CD4-positive, alpha-beta memory T cell (primary cell): ENCODE measurements at regions of chrX and their contacts with region 1.

Region 1: DNA sequence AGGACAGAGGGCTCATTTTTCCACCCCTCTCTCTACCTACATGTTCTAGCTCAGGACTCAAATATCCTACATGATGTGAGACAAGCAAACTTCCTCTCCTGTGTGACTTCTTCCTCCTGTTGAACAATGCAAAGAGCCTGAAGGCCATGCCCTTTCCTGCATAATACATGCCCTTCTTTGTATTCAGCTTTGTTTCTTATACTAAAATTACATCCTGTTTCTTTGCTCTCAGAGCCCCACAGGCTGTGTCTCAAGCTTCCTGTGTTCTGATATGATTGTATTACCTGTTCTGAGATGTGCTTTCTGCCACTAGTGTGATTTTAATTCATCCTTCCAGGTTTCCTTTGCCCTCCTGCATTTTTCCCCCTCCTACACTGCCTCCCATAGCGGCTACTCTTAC is 166.4 kb upstream of the AFF2 start:
- DNase-seq: peak in 4 of 5 donors; percentile 35 to 48 (median 40)
- H3K4me3 ChIP-seq: no peak overlapping the region
- H3K4me3 Mint-ChIP-seq: peak overlapping the region in 7 of 8 donors; percentile 27 to 72 (median 66)
- H3K27ac ChIP-seq: no peak overlapping the region
- H3K27ac Mint-ChIP-seq: peak overlapping the region; percentile 43 to 96 (median 82)
- H3K4me1 ChIP-seq: peaks cover 39% of the 10 kb centered on the region
- H3K4me1 Mint-ChIP-seq: peaks cover 20 to 47% (median 25%) of the 10 kb centered on the region in 4 donors
- H3K27me3 ChIP-seq: no peaks in the 10 kb centered on the region
- H3K27me3 Mint-ChIP-seq: no peaks in the 10 kb centered on the region

Region 2: GRCh38 chrX:148298737-148299136 is 35.3 kb before region 1 on chrX:
- CTCF ChIA-PET with region 1: no interaction called
- POLR2A ChIA-PET with region 1: no interaction called
- intact Hi-C with region 1: loop called (anchors 1 kb)
- DNase-seq: peak in 1 of 5 donors; percentile 53
- H3K4me3 ChIP-seq: no peak overlapping the region
- H3K4me3 Mint-ChIP-seq: no peak overlapping the region
- H3K27ac ChIP-seq: no peak overlapping the region
- H3K27ac Mint-ChIP-seq: no peak overlapping the region
- H3K4me1 ChIP-seq: no peaks in the 10 kb centered on the region
- H3K4me1 Mint-ChIP-seq: peaks cover 0 to 13% (median under 1%) of the 10 kb centered on the region in 4 donors
- H3K27me3 ChIP-seq: no peaks in the 10 kb centered on the region
- H3K27me3 Mint-ChIP-seq: peaks cover 0 to 1% of the 10 kb centered on the region in 2 donors

Region 3: DNA sequence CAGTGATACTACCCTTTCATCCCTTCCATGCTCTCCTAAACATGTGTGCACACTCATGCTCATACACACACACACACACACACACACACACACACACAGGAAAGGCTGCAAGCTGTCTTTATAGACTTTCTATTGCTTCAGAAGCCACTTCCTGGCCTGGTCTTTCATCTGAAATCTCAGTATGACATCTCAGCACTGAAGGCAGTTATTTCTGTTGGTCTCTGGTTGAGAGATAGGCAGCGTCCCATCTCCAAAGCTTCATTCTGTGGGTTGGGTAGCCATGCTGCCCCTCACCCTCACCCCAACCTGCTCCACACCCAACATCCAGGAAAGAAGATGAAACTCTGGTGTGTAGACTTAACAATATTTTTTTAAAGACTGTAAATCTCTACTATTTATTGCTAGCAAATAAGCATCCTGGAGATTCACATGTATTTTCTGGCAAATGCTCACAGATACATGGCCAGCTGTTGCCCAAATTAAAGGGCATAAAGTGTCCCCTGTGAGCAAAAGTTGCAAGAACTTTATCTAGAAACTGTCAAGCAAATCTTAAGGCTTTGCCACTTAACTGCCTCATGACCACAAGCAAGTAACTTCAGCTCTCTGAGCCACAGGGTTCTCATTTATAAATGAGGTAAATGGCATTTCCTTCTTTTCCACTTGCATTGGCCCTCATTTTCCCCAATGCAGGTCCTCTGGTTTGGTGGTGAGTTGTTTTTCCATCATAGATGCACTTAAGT is 23.4 kb before region 1 on chrX:
- CTCF ChIA-PET with region 1: interaction called, 5 read pairs
- POLR2A ChIA-PET with region 1: interaction called, 20 read pairs
- intact Hi-C with region 1: no loop called
- DNase-seq: peak; percentile 68 to 80 (median 77)
- H3K4me3 ChIP-seq: no peak overlapping the region
- H3K4me3 Mint-ChIP-seq: peak overlapping the region in 7 of 8 donors; percentile 60 to 86 (median 76)
- H3K27ac ChIP-seq: no peak overlapping the region
- H3K27ac Mint-ChIP-seq: peak overlapping the region; percentile 53 to 93 (median 77)
- H3K4me1 ChIP-seq: peaks cover 28% of the 10 kb centered on the region
- H3K4me1 Mint-ChIP-seq: peaks cover 22 to 42% (median 31%) of the 10 kb centered on the region in 4 donors
- H3K27me3 ChIP-seq: no peaks in the 10 kb centered on the region
- H3K27me3 Mint-ChIP-seq: no peaks in the 10 kb centered on the region

Region 4: DNA sequence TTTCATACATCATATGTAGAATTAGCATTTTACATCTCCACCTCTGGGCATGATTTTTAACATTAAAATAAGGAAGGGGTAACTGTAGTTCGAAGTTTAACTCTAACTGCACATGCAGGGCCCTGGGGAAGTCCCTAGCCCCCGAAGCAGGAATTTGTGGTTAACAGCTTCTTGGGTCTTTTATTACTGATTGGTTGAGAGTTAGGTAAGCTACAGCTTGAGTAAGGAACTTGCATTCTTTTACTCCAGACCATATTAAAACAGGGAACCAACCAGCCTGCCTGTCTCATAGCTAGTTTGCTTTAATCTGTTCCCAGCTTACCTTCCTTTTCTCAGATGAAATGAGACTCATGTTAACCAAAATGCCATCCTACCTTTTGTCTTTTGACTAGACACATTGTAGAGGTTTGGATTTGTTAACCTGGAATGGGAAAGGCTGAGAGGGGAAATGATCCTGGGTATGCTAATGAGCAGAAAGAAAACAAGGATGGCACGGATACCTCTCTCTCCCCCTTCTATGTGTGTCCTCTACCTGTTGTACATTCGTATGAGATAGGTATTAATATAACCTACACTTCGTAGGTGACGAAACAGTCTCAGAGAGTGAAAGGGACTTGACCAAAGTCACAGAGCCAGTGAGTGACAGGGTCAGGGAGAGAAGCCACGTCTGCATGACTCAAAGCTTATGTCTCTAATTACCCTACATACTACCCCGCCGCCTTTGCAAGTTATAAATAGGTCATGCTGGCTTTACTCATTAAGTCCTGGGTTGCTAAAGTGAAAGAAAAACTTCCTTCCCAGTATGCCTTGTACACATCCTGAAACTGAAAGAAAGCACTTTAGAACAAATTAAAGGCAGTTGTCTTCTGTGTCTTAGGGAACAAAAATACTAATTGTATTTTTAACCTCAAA is 46.9 kb after region 1 on chrX:
- CTCF ChIA-PET with region 1: interaction called, 3 read pairs
- POLR2A ChIA-PET with region 1: interaction called, 4 read pairs
- intact Hi-C with region 1: loop called (anchors 5 kb)
- DNase-seq: peak; percentile 32 to 60 (median 46)
- H3K4me3 ChIP-seq: peak overlapping the region; percentile 17 to 50
- H3K4me3 Mint-ChIP-seq: peak overlapping the region; percentile 85 to 94 (median 90)
- H3K27ac ChIP-seq: peak overlapping the region; percentile 72
- H3K27ac Mint-ChIP-seq: peak overlapping the region; percentile 89 to 95 (median 94)
- H3K4me1 ChIP-seq: peaks cover 29% of the 10 kb centered on the region
- H3K4me1 Mint-ChIP-seq: peaks cover 23 to 37% (median 27%) of the 10 kb centered on the region in 4 donors
- H3K27me3 ChIP-seq: no peaks in the 10 kb centered on the region
- H3K27me3 Mint-ChIP-seq: no peaks in the 10 kb centered on the region